Panc1 (cell line): ENCODE measurements at regions of chr7 and their contacts with region 1.

Region 1: DNA sequence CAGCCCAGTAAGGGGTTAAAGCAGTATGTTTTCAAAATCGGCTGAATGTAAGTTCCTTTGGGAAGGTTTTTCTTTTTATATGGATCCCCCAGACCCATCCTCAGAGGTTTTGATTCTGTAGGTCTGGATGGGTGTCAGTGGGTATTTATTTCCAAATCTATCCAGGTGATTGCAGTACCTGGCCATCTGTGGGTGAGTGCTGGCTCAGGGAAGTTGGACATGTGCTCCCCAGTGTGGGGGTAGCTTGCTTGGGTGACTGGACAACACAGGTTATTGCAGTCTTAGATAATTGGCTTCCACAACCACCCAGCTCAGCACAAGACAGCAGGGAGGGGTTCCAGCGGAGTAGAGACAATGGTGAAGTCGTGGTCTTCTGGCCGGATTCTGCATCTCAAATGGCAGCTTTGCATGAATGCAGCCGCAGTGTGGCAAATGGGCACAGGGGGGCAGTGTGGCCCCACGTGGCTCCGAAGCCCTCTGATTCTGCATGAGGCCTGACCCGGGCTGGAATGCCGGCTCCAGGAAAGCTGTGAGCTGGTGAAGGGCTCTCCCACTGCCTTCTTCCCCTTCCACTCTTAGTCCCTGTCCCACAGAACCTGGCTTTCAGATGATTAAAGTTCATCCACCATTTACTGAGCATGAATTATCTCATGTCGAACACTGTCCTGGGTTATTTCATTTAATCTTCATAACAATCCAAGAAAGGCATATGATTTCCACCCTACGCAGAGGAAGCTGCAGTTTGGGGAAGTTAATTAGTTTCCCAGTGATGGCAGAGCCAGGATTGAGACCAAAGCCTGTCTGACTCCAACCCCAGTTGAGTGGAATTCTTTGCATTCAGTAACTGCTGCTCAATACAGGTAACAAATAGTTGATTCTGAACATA is 64.5 kb upstream of the SYPL1 start:
- DNase-seq: peak; percentile 73
- ATAC-seq: peak; percentile 88
- H3K4me3 ChIP-seq: no peak overlapping the region
- H3K27ac ChIP-seq: no peak overlapping the region
- H3K4me1 ChIP-seq: peaks cover 6% of the 10 kb centered on the region
- H3K27me3 ChIP-seq: no peaks in the 10 kb centered on the region
- CTCF ChIP-seq: peak; percentile 96

Region 2: GRCh38 chr7:105945848-105946247 is 230.8 kb before region 1 on chr7:
- CTCF ChIA-PET with region 1: no interaction called
- POLR2A ChIA-PET with region 1: no interaction called
- in situ Hi-C with region 1: no loop called
- intact Hi-C with region 1: no loop called
- DNase-seq: no peak
- ATAC-seq: no peak
- H3K4me3 ChIP-seq: no peak overlapping the region
- H3K27ac ChIP-seq: no peak overlapping the region
- H3K4me1 ChIP-seq: no peaks in the 10 kb centered on the region
- H3K27me3 ChIP-seq: no peaks in the 10 kb centered on the region
- CTCF ChIP-seq: no peak

Region 3: GRCh38 chr7:106283831-106284713 is 107.4 kb after region 1 on chr7:
- CTCF ChIA-PET with region 1: interaction called, 3 read pairs
- POLR2A ChIA-PET with region 1: no interaction called
- in situ Hi-C with region 1: no loop called
- intact Hi-C with region 1: loop called (anchors 5 kb)
- DNase-seq: peak; percentile 33
- ATAC-seq: peak; percentile 79
- H3K4me3 ChIP-seq: peak overlapping the region; percentile 90 to 93
- H3K27ac ChIP-seq: peak overlapping the region; percentile 93
- H3K4me1 ChIP-seq: peaks cover 17% of the 10 kb centered on the region
- H3K27me3 ChIP-seq: no peaks in the 10 kb centered on the region
- CTCF ChIP-seq: no peak

Region 4: GRCh38 chr7:106461993-106462859 is 285.6 kb after region 1 on chr7:
- CTCF ChIA-PET with region 1: interaction called, 27 read pairs
- POLR2A ChIA-PET with region 1: interaction called, 4 read pairs
- in situ Hi-C with region 1: no loop called
- intact Hi-C with region 1: loop called (anchors 1 kb)
- DNase-seq: peak; percentile 58
- ATAC-seq: peak; percentile 72
- H3K4me3 ChIP-seq: no peak overlapping the region
- H3K27ac ChIP-seq: no peak overlapping the region
- H3K4me1 ChIP-seq: no peaks in the 10 kb centered on the region
- H3K27me3 ChIP-seq: no peaks in the 10 kb centered on the region
- CTCF ChIP-seq: peak; percentile 62; the same call in 1 of the 2 replicates

Region 5: DNA sequence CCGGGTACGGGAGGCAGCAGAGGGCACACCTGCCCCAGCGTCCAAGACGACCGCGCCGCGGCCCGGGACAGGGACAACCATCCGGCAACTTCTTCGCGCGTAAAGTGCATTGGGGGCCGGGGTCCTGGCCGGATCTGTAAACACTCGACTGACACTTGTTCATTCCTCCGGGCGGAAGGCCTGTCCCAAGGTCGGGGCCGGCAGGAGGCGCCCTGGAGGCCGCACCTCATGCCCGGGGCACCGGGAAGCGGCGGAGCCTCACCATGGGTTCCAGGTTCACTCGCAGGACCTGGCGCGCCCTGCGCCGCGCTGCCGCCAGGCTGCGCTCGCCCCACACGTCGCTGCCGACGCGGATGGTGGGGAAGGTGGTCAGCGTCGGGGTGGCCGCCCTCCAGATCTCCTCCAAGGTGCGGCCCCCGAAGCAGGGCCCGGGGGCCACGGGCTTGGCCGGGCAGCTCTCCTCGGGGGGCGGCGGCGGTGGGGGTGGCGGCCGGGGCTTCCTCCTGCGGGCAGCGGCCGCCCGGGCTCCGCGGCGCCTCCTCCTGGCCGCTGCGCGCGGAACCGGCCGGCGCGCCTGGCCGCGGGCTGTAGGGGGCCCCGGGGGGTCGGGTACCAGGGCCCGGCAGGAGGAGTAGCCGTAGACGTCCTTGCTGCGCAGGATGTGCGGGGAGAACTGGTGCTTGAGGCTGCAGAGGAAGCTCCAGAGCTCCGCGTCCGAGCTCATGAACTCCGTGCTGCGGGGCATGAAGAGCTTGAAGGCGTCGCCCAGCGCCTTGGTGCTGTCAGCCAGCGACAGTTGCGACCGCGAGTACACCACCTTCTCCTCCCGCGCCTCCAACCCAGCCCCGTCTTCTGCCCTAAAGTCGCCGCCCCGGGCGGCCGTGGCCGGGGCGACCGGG is 483.6 kb after region 1 on chr7:
- CTCF ChIA-PET with region 1: no interaction called
- POLR2A ChIA-PET with region 1: no interaction called
- in situ Hi-C with region 1: no loop called
- intact Hi-C with region 1: loop called (anchors 5 kb)
- DNase-seq: peak; percentile 55
- ATAC-seq: peak; percentile 89
- H3K4me3 ChIP-seq: peak overlapping the region; percentile 74 to 77
- H3K27ac ChIP-seq: peak overlapping the region; percentile 46; the same call in 1 of the 2 replicates
- H3K4me1 ChIP-seq: peaks cover 5% of the 10 kb centered on the region; the same call in 1 of the 2 replicates
- H3K27me3 ChIP-seq: peaks cover 5% of the 10 kb centered on the region
- CTCF ChIP-seq: peak; percentile 99

Region 6: DNA sequence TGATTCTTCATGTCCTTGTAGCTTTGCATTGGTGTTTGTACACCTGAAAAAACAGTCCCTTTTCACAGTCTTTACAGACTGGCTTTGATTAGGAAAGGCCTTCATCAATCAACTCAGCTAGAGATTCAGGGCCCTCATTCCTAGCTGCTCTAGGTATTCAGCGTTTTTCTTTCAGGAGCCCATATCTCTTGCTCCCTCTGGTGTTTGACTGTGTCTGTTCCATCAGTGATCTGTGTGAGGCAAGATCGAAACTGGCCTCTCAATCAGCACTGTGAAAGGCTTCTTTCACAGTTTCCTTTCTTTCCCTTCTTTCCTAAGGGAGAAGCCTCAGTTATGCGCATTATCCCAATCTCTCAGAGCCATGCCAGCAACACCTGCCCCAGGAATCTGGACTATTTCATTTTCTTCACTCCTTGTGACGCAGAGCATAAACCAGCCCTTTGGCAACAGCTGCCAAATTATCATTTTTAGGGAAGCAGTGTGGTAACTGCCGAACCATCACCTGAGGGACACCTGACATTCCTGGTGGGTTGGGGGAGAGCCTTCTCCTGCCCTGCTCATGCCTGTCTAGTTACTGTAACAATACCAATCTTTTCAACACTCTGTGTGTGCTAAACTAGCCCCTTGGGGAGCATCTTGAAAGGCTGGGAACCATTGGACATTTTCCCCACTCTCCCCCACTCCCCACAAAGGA is 560.0 kb after region 1 on chr7:
- CTCF ChIA-PET with region 1: interaction called, 10 read pairs
- POLR2A ChIA-PET with region 1: no interaction called
- in situ Hi-C with region 1: no loop called
- intact Hi-C with region 1: loop called (anchors 2 kb)
- DNase-seq: peak; percentile 57
- ATAC-seq: peak; percentile 88
- H3K4me3 ChIP-seq: no peak overlapping the region
- H3K27ac ChIP-seq: no peak overlapping the region
- H3K4me1 ChIP-seq: no peaks in the 10 kb centered on the region
- H3K27me3 ChIP-seq: no peaks in the 10 kb centered on the region
- CTCF ChIP-seq: peak; percentile 72